ENCODE measurements at regions of chr11 and their contacts with region 1.

Region 1: DNA sequence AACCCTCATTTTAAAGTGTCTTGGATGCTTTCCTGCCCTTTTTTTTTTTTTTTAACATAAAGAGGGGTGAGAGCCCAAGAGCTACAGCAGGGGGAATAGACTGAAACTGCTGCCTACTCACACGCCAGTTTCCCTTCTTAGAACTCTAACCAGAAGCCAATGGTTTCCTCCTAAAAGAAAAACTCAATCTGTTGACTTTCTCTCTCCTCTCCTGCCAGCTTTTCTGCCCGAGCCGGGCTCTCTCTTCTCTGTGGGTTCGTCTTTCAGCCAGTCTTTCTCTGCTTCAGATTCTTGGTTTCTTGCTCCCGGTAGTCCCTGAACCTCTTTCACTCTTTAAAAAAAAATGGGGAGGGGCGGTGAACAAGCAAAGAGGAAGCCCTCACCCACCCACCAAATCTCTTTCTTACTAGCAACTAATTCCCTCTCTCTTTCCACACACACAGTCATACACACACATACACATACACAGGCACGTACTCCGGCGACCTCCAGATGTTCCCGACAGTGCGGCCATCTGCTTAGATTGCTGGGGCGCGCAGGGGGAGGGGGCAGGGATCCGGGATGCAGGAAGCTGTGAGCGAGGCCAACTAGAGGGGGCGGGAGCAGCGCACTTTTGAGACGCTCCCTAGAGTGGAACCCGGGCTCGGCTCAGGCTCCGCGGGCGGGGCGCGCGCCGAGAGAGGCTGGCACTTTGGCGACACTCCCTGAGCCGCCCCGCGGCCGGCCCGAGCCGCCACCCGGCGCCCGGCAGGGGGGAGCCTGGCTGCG is 446 bp upstream of the TSKU start:
- H3K4me3 Mint-ChIP-seq: peak overlapping the region; percentile 74
- H3K27ac Mint-ChIP-seq: peak overlapping the region; percentile 74
- H3K4me1 Mint-ChIP-seq: peaks cover 8% of the 10 kb centered on the region
- H3K27me3 Mint-ChIP-seq: peaks cover 85% of the 10 kb centered on the region

Region 2: GRCh38 chr11:76744186-76745043 is 38.3 kb before region 1 on chr11:
- intact Hi-C with region 1: loop called (anchors 5 kb)
- H3K4me3 Mint-ChIP-seq: no peak overlapping the region
- H3K27ac Mint-ChIP-seq: peak overlapping the region; percentile 31
- H3K4me1 Mint-ChIP-seq: peaks cover 9% of the 10 kb centered on the region
- H3K27me3 Mint-ChIP-seq: peaks cover 22% of the 10 kb centered on the region

Measured in dendritic cell treated with granulocyte-macrophage colony-stimulating factor and Interleukin-4, amounts not matched to agents 40 ng/mL and 50 ng/mL, for 4 days (primary cell).